ENCODE measurements at regions of chr2 and their contacts with region 1.

Region 1: GRCh38 chr2:105257981-105258380 is 16.4 kb downstream of the GPR45 start:
- DNase-seq: no peak
- H3K4me3 ChIP-seq: no peak overlapping the region
- H3K27ac ChIP-seq: no peak overlapping the region
- H3K4me1 ChIP-seq: peaks cover 0 to 4% (median 0%) of the 10 kb centered on the region in 4 experiments; a peak in 1 of 7 replicates
- H3K27me3 ChIP-seq: no peaks in the 10 kb centered on the region
- CTCF ChIP-seq: no peak
- EP300 ChIP-seq: no peak
- POLR2A ChIP-seq: no peak
- RAD21 ChIP-seq: no peak

Region 2: DNA sequence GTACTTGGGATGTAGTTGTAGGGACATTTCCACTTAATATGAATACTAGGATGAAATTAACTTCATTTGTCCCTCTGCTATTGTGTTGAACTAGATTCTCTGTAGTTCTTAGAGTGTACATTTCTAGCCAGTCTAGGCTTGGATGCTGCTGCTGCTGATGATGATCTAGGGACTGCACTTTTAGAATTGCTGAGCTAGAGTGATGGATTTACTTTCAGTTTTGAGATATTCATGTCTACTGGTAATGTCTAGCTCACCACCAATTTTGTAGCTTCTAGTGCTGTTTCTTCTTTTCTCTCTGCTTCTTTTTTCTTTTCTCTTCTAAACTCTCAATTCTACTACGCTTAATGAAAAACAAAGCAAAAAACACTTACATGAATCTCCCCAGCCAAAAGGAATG is 170.7 kb before region 1 on chr2:
- CTCF ChIA-PET with region 1: no interaction called
- POLR2A ChIA-PET with region 1: no interaction called
- DNase-seq: no peak
- H3K4me3 ChIP-seq: no peak overlapping the region
- H3K27ac ChIP-seq: no peak overlapping the region
- H3K4me1 ChIP-seq: no peaks in the 10 kb centered on the region
- H3K27me3 ChIP-seq: no peaks in the 10 kb centered on the region
- CTCF ChIP-seq: no peak
- EP300 ChIP-seq: no peak
- POLR2A ChIP-seq: no peak
- RAD21 ChIP-seq: no peak

Region 3: GRCh38 chr2:105243961-105244360 is 14.0 kb before region 1 on chr2:
- CTCF ChIA-PET with region 1: interaction called, 53 read pairs
- POLR2A ChIA-PET with region 1: no interaction called
- DNase-seq: peak in 1 of 2 experiments; percentile 72
- H3K4me3 ChIP-seq: no peak overlapping the region
- H3K27ac ChIP-seq: no peak overlapping the region
- H3K4me1 ChIP-seq: peaks cover 0 to 2% (median under 1%) of the 10 kb centered on the region in 4 experiments; a peak in 1 of 7 replicates
- H3K27me3 ChIP-seq: no peaks in the 10 kb centered on the region
- CTCF ChIP-seq: peak; percentile 64 to 76 (median 69)
- EP300 ChIP-seq: no peak
- POLR2A ChIP-seq: no peak
- RAD21 ChIP-seq: peak; percentile 51 to 60

Region 4: GRCh38 chr2:105388971-105389381 is 131.0 kb after region 1 on chr2:
- CTCF ChIA-PET with region 1: no interaction called
- POLR2A ChIA-PET with region 1: no interaction called
- DNase-seq: no peak
- H3K4me3 ChIP-seq: no peak overlapping the region
- H3K27ac ChIP-seq: no peak overlapping the region
- H3K4me1 ChIP-seq: no peaks in the 10 kb centered on the region
- H3K27me3 ChIP-seq: no peaks in the 10 kb centered on the region
- CTCF ChIP-seq: no peak
- EP300 ChIP-seq: no peak
- POLR2A ChIP-seq: no peak
- RAD21 ChIP-seq: no peak